OCI-LY7 (cell line): ENCODE measurements at regions of chr12 and their contacts with region 1.

Region 1: DNA sequence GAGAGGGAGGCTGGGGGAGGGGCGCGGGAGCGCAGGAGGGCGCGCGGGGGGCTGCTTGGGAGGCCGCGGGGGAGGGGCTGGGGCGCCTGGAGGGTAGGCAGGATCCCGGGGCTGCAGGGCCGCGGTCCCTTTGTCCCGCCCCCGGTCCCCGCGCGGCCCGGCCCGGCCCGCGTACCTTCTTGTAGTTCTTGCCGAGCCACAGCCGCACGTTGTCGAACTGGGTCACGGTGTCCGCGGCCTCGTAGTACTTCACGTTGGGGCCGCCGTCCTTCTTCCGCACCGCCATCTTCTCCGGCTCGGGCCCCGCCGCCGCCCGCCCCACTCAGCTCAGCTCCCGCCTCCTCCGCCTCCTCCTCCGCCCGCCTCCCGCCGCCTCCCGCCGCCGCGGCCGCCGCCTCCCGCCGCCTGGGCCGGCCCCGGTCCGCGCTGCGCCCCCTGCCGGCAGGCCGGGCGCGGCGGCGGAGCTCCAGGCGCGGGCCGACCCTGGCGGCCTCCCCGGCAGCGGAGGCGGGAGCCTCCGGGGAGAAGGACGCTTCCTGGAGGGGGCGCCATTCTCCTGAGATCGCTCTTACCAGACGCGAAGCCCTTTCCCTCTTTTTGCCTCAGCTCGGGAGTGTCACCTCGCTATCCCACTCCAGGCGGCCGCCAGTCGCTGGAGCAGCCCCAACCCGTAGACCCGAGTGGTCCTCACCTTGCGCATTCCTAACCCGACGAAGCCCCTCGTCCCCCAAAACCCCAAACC is at the start of gene SMARCC2:
- DNase-seq: peak; percentile 90
- H3K4me3 ChIP-seq: peak within 1 kb of the TSS; percentile 79
- H3K27ac ChIP-seq: peak within 1 kb of the TSS; percentile 72
- H3K4me1 ChIP-seq: peaks cover 40% of the 10 kb centered on the region
- CTCF ChIP-seq: peak; percentile 77
- total RNA-seq, gene SMARCC2: 59.7 and 68.3 TPM in 2 replicates

Region 2: DNA sequence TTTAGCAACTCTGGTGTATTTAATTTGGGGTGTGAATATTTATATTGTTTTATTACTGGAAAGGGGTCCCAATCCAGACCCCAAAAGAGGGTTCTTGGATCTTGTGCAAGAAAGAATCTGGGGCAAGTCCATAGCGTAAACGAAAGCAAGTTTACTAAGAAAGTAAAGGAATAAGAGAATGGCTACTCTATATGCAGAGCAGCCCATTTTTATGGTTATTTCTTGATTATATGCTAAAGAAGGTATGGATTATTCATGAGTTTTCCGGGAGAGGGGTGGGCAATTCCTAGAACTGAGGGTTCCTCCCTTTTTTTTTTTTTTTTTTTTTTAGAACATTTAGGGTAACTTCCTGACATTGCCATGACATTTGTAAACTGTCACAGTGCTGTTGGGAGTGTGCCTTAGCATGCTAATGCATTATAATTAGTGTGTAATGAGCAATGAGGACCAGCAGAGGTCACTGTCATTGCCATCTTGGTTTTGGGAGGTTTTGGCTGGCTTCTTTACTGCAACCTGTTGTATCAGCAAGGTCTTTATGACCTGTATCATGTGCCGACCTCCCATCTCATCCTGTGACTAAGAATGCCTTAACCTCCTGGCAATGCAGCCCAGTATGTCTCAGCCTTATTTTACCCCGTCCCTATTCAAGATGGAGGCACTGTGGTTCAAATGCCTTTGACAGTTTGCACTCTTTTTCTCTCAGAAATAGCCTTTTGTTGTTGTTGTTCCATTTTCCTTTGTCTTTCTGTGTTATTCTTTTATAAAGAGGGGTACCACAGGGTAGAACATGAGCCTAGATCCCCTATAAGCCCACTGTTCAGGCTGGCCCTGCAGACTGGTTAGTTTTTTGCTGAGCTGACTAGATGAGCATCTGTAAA is 1465.7 kb before region 1 on chr12:
- CTCF ChIA-PET with region 1: no interaction called
- POLR2A ChIA-PET with region 1: no interaction called
- intact Hi-C with region 1: no loop called
- DNase-seq: peak; percentile 39
- H3K4me3 ChIP-seq: no peak overlapping the region
- H3K27ac ChIP-seq: no peak overlapping the region
- H3K4me1 ChIP-seq: no peaks in the 10 kb centered on the region
- CTCF ChIP-seq: peak; percentile 77

Region 3: DNA sequence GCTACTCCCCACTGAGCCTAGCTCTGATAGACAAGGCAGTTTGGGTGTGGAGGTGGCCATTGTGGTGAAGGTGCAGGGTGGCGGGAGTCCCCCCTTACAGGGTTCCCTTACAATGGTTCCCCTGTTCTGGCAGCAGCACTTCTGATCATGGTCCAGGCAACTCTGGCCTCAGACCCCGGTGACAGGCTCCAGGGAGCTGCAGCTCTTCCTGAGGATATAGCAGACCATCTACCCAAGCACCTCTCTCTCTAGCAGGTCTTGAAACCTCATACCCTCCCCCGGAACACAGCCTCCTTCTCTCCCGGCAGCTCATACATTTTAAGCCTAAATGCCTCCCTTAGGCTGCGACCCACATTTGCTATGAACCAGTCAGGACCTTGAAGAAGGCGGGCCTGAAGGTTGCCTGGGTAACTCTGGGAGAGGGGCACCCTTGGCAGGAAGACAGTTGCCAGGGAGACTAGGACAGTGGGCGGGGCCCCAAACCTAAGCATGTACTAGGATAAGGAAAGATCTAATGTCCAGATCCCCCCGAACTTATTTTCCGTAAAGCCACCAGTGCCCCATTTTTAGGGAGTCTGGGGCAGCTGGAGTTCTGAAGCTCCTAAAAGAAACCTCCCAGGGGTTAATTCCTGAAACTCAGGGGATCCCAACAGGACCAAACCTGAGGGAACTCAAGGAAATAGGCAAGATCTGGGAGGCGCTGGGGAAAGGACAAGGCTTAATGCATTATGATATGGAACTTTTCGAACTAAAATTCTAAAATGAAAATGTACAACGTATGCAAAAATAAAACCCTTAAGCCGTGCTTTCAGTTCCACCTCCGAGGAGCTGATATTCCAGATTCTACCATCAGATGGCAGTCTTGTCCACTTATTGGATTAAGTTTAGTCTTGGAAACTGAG is 451.0 kb before region 1 on chr12:
- CTCF ChIA-PET with region 1: interaction called, 3 read pairs
- POLR2A ChIA-PET with region 1: no interaction called
- intact Hi-C with region 1: loop called (anchors 2 kb)
- DNase-seq: peak; percentile 96
- H3K4me3 ChIP-seq: peak overlapping the region; percentile 72
- H3K27ac ChIP-seq: peak overlapping the region; percentile 66
- H3K4me1 ChIP-seq: peaks cover 26% of the 10 kb centered on the region
- CTCF ChIP-seq: peak; percentile 94

Region 4: GRCh38 chr12:56127888-56128669 is 61.3 kb before region 1 on chr12 and contains the start of gene ESYT1:
- CTCF ChIA-PET with region 1: interaction called, 6 read pairs
- POLR2A ChIA-PET with region 1: interaction called, 22 read pairs
- intact Hi-C with region 1: loop called (anchors 1 kb)
- DNase-seq: peak; percentile 100
- H3K4me3 ChIP-seq: peak within 1 kb of the TSS; percentile 83
- H3K27ac ChIP-seq: peak within 1 kb of the TSS; percentile 96
- H3K4me1 ChIP-seq: peaks cover 48% of the 10 kb centered on the region
- CTCF ChIP-seq: no peak
- total RNA-seq, gene ESYT1: 74.6 and 85.9 TPM in 2 replicates

Region 5: GRCh38 chr12:56178347-56178746 is 11.0 kb before region 1 on chr12:
- CTCF ChIA-PET with region 1: interaction called, 12 read pairs
- POLR2A ChIA-PET with region 1: interaction called, 8 read pairs
- intact Hi-C with region 1: no loop called
- DNase-seq: no peak
- H3K4me3 ChIP-seq: no peak overlapping the region
- H3K27ac ChIP-seq: no peak overlapping the region
- H3K4me1 ChIP-seq: no peaks in the 10 kb centered on the region
- CTCF ChIP-seq: no peak

Region 6: DNA sequence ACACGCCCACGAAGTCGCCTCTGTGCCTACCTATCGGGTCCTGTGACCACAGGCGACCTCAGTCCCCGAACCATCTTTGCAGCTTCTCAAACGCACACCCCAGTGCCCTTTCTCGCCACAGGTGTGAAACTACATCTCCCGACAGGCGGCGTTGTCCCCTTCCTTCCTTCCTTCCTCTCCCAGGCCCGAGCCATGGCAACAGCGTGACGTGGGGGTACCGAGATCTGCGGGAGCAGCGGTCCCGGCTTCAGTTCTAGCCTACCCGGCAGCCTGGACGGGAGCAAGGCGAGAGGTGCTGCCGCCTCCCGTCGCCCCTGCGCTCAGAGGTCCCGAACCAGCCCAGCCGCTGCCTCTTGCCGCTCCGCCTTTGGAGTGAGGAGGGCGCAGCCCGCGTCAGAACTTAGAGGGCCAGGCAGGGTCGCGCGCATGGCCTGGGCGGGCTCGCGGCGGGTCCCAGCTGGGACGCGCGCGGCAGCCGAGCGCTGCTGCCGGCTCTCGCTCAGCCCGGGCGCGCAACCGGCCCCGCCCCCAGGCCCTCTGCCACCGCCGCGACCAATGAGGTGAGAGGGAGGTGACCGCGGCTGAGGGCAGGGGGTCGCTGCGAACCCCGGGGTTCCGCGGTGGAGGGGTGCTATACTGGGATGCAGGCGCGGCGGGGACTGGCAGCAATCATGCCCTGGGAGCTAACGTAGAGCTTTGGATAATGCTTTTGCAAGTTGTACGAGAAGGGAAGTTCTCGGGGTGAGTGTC is 77.5 kb after region 1 on chr12 and contains the start of gene COQ10A:
- CTCF ChIA-PET with region 1: interaction called, 12 read pairs
- POLR2A ChIA-PET with region 1: interaction called, 4 read pairs
- intact Hi-C with region 1: no loop called
- DNase-seq: peak; percentile 89
- H3K4me3 ChIP-seq: peak within 1 kb of the TSS; percentile 69
- H3K27ac ChIP-seq: peak within 1 kb of the TSS; percentile 62
- H3K4me1 ChIP-seq: peaks cover 16% of the 10 kb centered on the region
- CTCF ChIP-seq: peak; percentile 72
- total RNA-seq, gene COQ10A: 15.8 and 22.1 TPM in 2 replicates

Region 7: GRCh38 chr12:57340104-57340503 is 1150.8 kb after region 1 on chr12:
- CTCF ChIA-PET with region 1: interaction called, 17 read pairs
- POLR2A ChIA-PET with region 1: no interaction called
- intact Hi-C with region 1: no loop called
- DNase-seq: no peak
- H3K4me3 ChIP-seq: no peak overlapping the region
- H3K27ac ChIP-seq: no peak overlapping the region
- H3K4me1 ChIP-seq: no peaks in the 10 kb centered on the region
- CTCF ChIP-seq: no peak